MCF 10A (cell line): ENCODE measurements at regions of chr21 and their contacts with region 1.

Region 1: GRCh38 chr21:17925000-17925610 is 105.9 kb upstream of the C21orf91 start:
- DNase-seq: peak; percentile 84
- H3K4me3 Mint-ChIP-seq: no peak overlapping the region
- H3K27ac Mint-ChIP-seq: no peak overlapping the region
- H3K4me1 Mint-ChIP-seq: peaks cover 32% of the 10 kb centered on the region
- H3K27me3 Mint-ChIP-seq: no peaks in the 10 kb centered on the region
- CTCF ChIP-seq: peak; percentile 73

Region 2: GRCh38 chr21:17667256-17667655 is 257.8 kb before region 1 on chr21:
- CTCF ChIA-PET with region 1: interaction called, 13 read pairs
- POLR2A ChIA-PET with region 1: no interaction called
- intact Hi-C with region 1: no loop called
- DNase-seq: peak; percentile 22
- H3K4me3 Mint-ChIP-seq: no peak overlapping the region
- H3K27ac Mint-ChIP-seq: peak overlapping the region; percentile 91
- H3K4me1 Mint-ChIP-seq: peaks cover 8% of the 10 kb centered on the region
- H3K27me3 Mint-ChIP-seq: no peaks in the 10 kb centered on the region
- CTCF ChIP-seq: no peak

Region 3: DNA sequence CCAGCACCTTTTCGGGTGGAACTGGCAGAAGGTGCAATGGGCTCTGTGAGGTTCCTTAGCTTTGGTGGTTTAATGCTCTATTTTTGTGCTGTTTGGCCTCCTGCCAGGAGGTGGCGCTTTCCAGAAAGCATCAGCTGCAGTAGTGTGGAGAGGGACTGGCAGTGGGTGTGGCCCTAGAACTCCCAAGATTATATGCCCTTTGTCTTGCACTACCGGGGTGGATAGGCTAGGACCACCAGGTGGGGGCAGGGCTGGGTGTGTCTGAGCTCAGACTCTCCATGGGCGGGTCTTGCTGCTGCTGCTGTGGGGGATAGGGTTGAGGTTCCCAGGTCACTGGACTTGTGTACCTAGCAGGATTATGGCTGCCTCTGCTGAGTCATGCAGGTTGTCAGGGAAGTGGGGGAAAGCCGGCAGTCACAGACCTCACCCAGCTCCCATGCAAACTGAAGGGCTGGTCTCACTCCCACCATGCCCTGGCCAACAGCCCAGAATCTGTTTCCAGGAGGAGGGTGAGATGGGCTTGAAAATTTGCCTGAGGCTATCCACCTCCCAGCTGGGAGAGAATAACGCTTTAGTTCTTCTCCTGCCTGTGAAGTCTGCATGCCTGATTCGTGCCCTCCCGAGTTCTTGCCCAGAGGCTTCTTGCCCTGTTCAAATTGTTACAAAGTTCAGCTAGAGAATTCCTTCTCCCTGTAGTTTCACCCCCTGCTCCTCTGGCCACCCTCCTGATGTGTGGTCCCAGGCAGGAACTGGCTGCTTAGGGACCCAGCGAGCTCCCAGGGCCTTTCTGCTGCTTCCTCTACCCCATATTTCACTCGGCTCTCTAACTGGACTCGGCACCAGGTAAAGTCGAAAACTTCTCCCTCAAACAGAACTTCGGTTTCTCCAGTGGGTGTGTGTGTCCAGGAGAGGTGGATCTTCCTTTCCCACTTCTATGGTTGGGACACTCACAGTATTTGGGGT is 235.9 kb before region 1 on chr21:
- CTCF ChIA-PET with region 1: interaction called, 69 read pairs
- POLR2A ChIA-PET with region 1: interaction called, 45 read pairs
- intact Hi-C with region 1: no loop called
- DNase-seq: peak; percentile 95
- H3K4me3 Mint-ChIP-seq: peak overlapping the region; percentile 64
- H3K27ac Mint-ChIP-seq: peak overlapping the region; percentile 97
- H3K4me1 Mint-ChIP-seq: peaks cover 30% of the 10 kb centered on the region
- H3K27me3 Mint-ChIP-seq: no peaks in the 10 kb centered on the region
- CTCF ChIP-seq: peak; percentile 33

Region 4: GRCh38 chr21:17848228-17848627 is 76.9 kb before region 1 on chr21:
- CTCF ChIA-PET with region 1: interaction called, 6 read pairs
- POLR2A ChIA-PET with region 1: interaction called, 5 read pairs
- intact Hi-C with region 1: loop called (anchors 1 kb)
- DNase-seq: peak; percentile 87
- H3K4me3 Mint-ChIP-seq: peak overlapping the region; percentile 17
- H3K27ac Mint-ChIP-seq: peak overlapping the region; percentile 80
- H3K4me1 Mint-ChIP-seq: peaks cover 7% of the 10 kb centered on the region
- H3K27me3 Mint-ChIP-seq: no peaks in the 10 kb centered on the region
- CTCF ChIP-seq: no peak

Region 5: DNA sequence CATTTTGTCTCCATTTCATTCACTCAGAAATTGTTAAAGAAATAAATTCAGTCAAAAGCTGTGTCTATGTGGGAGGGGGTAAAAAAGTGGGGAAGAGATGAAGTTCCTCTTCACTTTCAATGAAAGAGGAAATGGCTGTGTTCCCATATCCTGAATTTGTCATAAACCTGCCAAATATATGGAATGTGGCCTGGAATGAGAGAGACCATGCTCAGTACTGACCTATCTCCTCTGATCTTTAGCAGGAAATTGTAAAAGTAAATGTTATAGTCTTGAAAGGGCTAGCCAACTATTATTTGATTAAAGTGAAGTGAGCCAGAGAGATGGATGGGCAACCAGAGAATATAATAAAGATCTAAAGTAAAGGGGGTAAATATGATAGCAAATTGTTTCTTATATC is 24.3 kb after region 1 on chr21:
- CTCF ChIA-PET with region 1: interaction called, 17 read pairs
- POLR2A ChIA-PET with region 1: interaction called, 3 read pairs
- intact Hi-C with region 1: no loop called
- DNase-seq: no peak
- H3K4me3 Mint-ChIP-seq: no peak overlapping the region
- H3K27ac Mint-ChIP-seq: no peak overlapping the region
- H3K4me1 Mint-ChIP-seq: peaks cover 6% of the 10 kb centered on the region
- H3K27me3 Mint-ChIP-seq: no peaks in the 10 kb centered on the region
- CTCF ChIP-seq: no peak

Region 6: GRCh38 chr21:18164933-18165332 is 239.8 kb after region 1 on chr21:
- CTCF ChIA-PET with region 1: interaction called, 3 read pairs
- POLR2A ChIA-PET with region 1: no interaction called
- intact Hi-C with region 1: loop called (anchors 10 kb)
- DNase-seq: peak; percentile 84
- H3K4me3 Mint-ChIP-seq: no peak overlapping the region
- H3K27ac Mint-ChIP-seq: no peak overlapping the region
- H3K4me1 Mint-ChIP-seq: peaks cover 6% of the 10 kb centered on the region
- H3K27me3 Mint-ChIP-seq: no peaks in the 10 kb centered on the region
- CTCF ChIP-seq: peak; percentile 37

Region 7: DNA sequence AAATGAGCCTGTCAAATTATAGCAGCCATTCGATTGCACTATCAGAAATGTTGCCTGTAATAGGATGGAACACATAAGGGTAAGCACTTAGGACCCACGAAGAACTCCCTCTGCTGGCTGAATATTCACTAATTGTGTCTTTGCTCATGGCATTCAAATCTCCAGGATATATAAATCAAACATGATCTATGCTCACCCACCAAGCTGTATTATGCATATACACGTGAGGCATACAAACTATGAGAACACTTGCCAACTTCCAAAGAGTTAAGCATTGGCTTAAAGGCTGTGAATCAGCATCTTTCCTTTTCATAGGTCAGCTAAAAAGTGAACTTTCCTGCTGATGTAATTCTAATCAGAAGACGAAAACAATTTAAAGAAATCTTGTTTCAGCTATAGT is 444.0 kb after region 1 on chr21:
- CTCF ChIA-PET with region 1: interaction called, 10 read pairs
- POLR2A ChIA-PET with region 1: no interaction called
- intact Hi-C with region 1: no loop called
- DNase-seq: peak; percentile 65
- H3K4me3 Mint-ChIP-seq: no peak overlapping the region
- H3K27ac Mint-ChIP-seq: no peak overlapping the region
- H3K4me1 Mint-ChIP-seq: no peaks in the 10 kb centered on the region
- H3K27me3 Mint-ChIP-seq: no peaks in the 10 kb centered on the region
- CTCF ChIP-seq: peak; percentile 20